ENCODE measurements at regions of chr11 and their contacts with region 1.

Region 1: DNA sequence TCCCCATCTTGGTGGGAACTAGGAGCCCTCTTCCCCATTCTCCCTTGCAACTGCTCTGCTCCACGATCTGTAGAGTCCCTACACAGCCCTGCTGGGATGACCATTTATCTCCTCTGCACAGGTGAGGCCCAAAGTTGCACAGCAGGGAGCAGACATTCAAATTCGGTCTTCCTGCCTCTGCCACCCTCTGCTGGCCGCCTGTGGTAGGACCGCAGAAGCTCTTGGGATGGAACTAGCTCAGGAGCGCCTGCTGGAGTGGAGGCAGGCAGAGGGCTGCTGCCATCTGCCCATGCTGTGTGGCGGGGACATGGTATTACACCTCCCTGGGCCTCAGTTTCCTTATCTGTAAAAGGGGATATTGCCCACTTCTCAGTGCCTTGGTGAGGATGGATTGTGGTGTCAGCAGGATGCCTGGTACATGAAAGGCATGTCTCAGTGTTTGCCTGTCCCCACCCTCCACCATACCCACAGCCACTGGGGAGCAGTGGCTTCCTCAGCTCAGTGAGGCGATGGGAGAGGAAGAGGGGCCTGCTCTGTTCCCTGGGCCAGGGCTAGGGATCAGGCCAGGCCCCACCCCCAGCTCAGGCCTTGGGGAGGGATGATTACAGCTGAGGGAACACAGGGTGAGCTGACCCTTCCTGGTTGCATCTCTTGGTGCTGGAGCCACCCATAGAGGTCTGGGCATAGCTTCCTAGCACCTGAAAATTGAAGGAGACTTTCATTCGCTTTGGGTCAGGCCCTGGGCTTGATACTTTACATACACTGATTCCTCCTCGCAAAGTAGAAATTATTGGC is 11.3 kb upstream of the OMP start:
- DNase-seq: peak; percentile 73
- H3K4me3 ChIP-seq: no peak overlapping the region
- H3K27ac ChIP-seq: no peak overlapping the region
- H3K4me1 ChIP-seq: no peaks in the 10 kb centered on the region
- H3K27me3 ChIP-seq: no peaks in the 10 kb centered on the region
- CTCF ChIP-seq: peak; percentile 84 to 91
- POLR2A ChIP-seq: no peak

Region 2: GRCh38 chr11:76744186-76745043 is 346.9 kb before region 1 on chr11:
- CTCF ChIA-PET with region 1: no interaction called
- POLR2A ChIA-PET with region 1: no interaction called
- dilution Hi-C with region 1: no loop called
- intact Hi-C with region 1: no loop called
- DNase-seq: no peak
- H3K4me3 ChIP-seq: no peak overlapping the region
- H3K27ac ChIP-seq: no peak overlapping the region
- H3K4me1 ChIP-seq: no peaks in the 10 kb centered on the region
- H3K27me3 ChIP-seq: peaks cover 0 to 6% of the 10 kb centered on the region in 2 experiments
- CTCF ChIP-seq: no peak
- POLR2A ChIP-seq: no peak

Region 3: DNA sequence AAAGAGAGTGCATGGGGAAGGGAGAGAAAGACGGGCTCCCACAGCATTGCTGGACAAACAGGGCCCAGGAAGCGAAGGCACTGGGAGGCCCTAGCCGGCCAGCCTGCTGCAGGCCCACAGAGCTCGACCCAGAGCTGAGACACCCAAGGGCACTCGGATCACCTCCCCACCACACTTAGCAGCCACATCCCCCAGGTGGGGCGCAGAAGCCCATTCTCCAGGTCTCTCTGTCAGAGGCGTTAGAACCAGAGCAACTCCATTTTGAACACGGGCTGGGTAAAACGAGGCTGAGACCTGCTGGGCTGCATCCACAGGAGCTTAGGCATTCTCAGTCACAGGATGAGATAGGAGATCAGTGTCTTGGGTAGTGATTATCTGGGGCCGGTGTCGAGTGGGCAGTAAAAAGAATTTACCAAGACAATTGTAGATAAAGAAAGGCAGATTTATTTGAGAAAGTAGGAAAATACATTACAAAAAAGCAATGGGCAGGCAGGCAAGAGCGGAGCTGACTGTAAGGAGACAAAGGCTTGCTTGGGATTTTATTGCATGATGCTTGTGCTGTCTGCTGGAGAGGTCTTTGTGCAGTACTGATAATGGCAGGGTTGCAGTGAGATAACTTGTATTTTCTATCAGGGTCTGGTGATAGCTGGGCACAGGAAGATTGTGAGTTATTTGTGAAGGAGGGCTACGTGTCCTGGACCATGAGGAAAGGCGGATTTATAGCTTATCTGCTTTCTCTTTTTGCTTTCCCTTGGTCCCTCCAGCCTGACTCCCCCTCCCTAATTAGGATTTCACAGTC is 37.9 kb before region 1 on chr11:
- CTCF ChIA-PET with region 1: interaction called, 316 read pairs
- POLR2A ChIA-PET with region 1: no interaction called
- dilution Hi-C with region 1: no loop called
- intact Hi-C with region 1: no loop called
- DNase-seq: no peak
- H3K4me3 ChIP-seq: no peak overlapping the region
- H3K27ac ChIP-seq: no peak overlapping the region
- H3K4me1 ChIP-seq: no peaks in the 10 kb centered on the region
- H3K27me3 ChIP-seq: peaks cover 2% of the 10 kb centered on the region in 2 experiments
- CTCF ChIP-seq: no peak
- POLR2A ChIP-seq: no peak

Region 4: GRCh38 chr11:77073328-77074001 is 17.9 kb before region 1 on chr11:
- CTCF ChIA-PET with region 1: interaction called, 44 read pairs
- POLR2A ChIA-PET with region 1: no interaction called
- dilution Hi-C with region 1: no loop called
- intact Hi-C with region 1: loop called (anchors 1 kb)
- DNase-seq: peak; percentile 88
- H3K4me3 ChIP-seq: no peak overlapping the region
- H3K27ac ChIP-seq: peak overlapping the region; percentile 80
- H3K4me1 ChIP-seq: peaks cover 30% of the 10 kb centered on the region
- H3K27me3 ChIP-seq: no peaks in the 10 kb centered on the region
- CTCF ChIP-seq: peak; percentile 28 to 46
- POLR2A ChIP-seq: no peak

Region 5: GRCh38 chr11:77121096-77121640 is 29.8 kb after region 1 on chr11:
- CTCF ChIA-PET with region 1: interaction called, 11 read pairs
- POLR2A ChIA-PET with region 1: no interaction called
- dilution Hi-C with region 1: no loop called
- intact Hi-C with region 1: no loop called
- DNase-seq: no peak
- H3K4me3 ChIP-seq: no peak overlapping the region
- H3K27ac ChIP-seq: no peak overlapping the region
- H3K4me1 ChIP-seq: no peaks in the 10 kb centered on the region
- H3K27me3 ChIP-seq: no peaks in the 10 kb centered on the region
- CTCF ChIP-seq: no peak
- POLR2A ChIP-seq: no peak

Region 6: DNA sequence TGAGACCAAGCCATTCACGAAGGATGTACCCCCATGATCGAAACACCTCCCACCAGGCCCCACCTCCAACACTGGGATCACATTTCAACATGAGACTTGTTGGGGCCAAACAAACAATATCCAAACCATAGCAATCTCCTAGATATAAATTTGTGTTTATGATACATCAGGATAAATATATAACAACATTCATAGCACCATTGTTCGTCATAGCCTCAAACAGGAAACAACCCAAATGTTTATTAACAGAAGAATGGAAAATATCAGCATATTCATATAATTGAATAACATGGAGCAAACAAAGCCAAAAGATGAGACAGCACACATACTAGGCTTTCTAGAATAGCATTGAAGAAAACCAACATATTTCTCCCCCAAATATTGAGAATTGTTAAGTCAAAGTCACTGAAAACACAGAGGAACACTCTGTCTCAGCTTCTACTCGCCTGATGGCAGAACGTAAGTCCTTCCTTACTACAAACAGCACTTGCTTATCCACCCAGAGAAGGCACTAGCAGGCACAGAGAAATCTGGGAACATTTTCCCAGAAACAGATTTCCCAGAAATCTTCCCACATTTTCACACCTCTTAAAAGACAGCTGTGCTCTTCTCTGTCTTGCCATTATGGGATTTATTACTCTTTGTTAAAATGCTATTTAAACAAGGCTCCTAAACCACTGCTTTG is 218.2 kb after region 1 on chr11:
- CTCF ChIA-PET with region 1: no interaction called
- POLR2A ChIA-PET with region 1: no interaction called
- dilution Hi-C with region 1: no loop called
- intact Hi-C with region 1: no loop called
- DNase-seq: no peak
- H3K4me3 ChIP-seq: no peak overlapping the region
- H3K27ac ChIP-seq: no peak overlapping the region
- H3K4me1 ChIP-seq: no peaks in the 10 kb centered on the region
- H3K27me3 ChIP-seq: peaks cover 0 to 2% of the 10 kb centered on the region in 2 experiments
- CTCF ChIP-seq: no peak
- POLR2A ChIP-seq: no peak

Measured in endothelial cell of umbilical vein (primary cell).